SK-N-SH (cell line): ENCODE measurements at regions of chr4 and their contacts with region 1.

Region 1: GRCh38 chr4:174135936-174136406 is 147.5 kb downstream of the FBXO8 start:
- DNase-seq: peak; percentile 57
- H3K4me3 ChIP-seq: peak overlapping the region; percentile 42 to 55
- H3K27ac ChIP-seq: peak overlapping the region; percentile 56 to 100; a peak in 3 of 4 replicates
- H3K4me1 ChIP-seq: peaks cover 10 to 38% of the 10 kb centered on the region in 2 experiments; a peak in 3 of 4 replicates
- H3K27me3 ChIP-seq: no peaks in the 10 kb centered on the region
- CTCF ChIP-seq: no peak
- EP300 ChIP-seq: peak in 1 of 2 experiments; percentile 92; a peak in 2 of 4 replicates
- RAD21 ChIP-seq: 0 out of 2 replicates have a peak, but pooled peaks have one; percentile 6

Region 2: GRCh38 chr4:174069848-174070330 is 66.1 kb before region 1 on chr4:
- CTCF ChIA-PET with region 1: interaction called, 4 read pairs
- POLR2A ChIA-PET with region 1: interaction called, 22 read pairs
- DNase-seq: peak; percentile 69
- H3K4me3 ChIP-seq: no peak overlapping the region
- H3K27ac ChIP-seq: peak overlapping the region in 1 of 2 experiments; percentile 100; a peak in 2 of 4 replicates
- H3K4me1 ChIP-seq: peaks cover 0 to 26% of the 10 kb centered on the region in 2 experiments; a peak in 2 of 4 replicates
- H3K27me3 ChIP-seq: no peaks in the 10 kb centered on the region
- CTCF ChIP-seq: no peak
- EP300 ChIP-seq: peak; percentile 82 to 100
- RAD21 ChIP-seq: peak; percentile 46

Region 3: DNA sequence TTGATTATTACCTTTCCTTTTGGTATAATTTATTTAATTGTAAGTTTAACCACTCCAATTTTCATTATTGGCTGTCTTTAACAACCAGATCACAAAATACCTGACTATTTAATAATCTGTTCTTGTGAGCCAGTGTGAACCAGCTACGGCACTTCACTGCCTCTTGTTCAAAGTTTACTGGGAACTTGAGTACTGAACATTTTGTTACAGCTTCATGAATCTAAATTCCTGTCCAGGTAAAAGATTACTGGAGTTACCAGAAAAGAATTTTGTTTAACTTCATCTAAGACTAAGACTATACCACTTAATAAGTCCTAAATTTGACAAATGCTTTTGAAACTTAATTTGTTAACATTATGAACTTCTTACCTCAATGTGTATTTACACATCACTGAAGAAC is 30.8 kb before region 1 on chr4:
- CTCF ChIA-PET with region 1: no interaction called
- POLR2A ChIA-PET with region 1: no interaction called
- DNase-seq: no peak
- H3K4me3 ChIP-seq: no peak overlapping the region
- H3K27ac ChIP-seq: no peak overlapping the region; a peak in 1 of 4 replicates
- H3K4me1 ChIP-seq: peaks cover 0 to 4% of the 10 kb centered on the region in 2 experiments; a peak in 2 of 4 replicates
- H3K27me3 ChIP-seq: no peaks in the 10 kb centered on the region; the same call in 1 of the 2 replicates
- CTCF ChIP-seq: no peak
- EP300 ChIP-seq: no peak
- RAD21 ChIP-seq: no peak

Region 4: GRCh38 chr4:174147863-174148262 is 11.9 kb after region 1 on chr4:
- CTCF ChIA-PET with region 1: interaction called, 22 read pairs
- POLR2A ChIA-PET with region 1: interaction called, 27 read pairs
- DNase-seq: no peak
- H3K4me3 ChIP-seq: no peak overlapping the region
- H3K27ac ChIP-seq: peak overlapping the region in 1 of 2 experiments; percentile 100; a peak in 2 of 4 replicates
- H3K4me1 ChIP-seq: peaks cover 7 to 49% of the 10 kb centered on the region in 2 experiments; a peak in 3 of 4 replicates
- H3K27me3 ChIP-seq: no peaks in the 10 kb centered on the region
- CTCF ChIP-seq: no peak
- EP300 ChIP-seq: no peak
- RAD21 ChIP-seq: no peak

Region 5: GRCh38 chr4:174193438-174194374 is 57.7 kb after region 1 on chr4:
- CTCF ChIA-PET with region 1: interaction called, 3 read pairs
- POLR2A ChIA-PET with region 1: interaction called, 14 read pairs
- DNase-seq: peak; percentile 42
- H3K4me3 ChIP-seq: no peak overlapping the region
- H3K27ac ChIP-seq: peak overlapping the region in 1 of 2 experiments; percentile 100; a peak in 3 of 4 replicates
- H3K4me1 ChIP-seq: peaks cover 0 to 46% of the 10 kb centered on the region in 2 experiments; a peak in 2 of 4 replicates
- H3K27me3 ChIP-seq: no peaks in the 10 kb centered on the region
- CTCF ChIP-seq: no peak
- EP300 ChIP-seq: peak in 1 of 2 experiments; percentile 98; a peak in 3 of 4 replicates
- RAD21 ChIP-seq: peak; percentile 33; the same call in 1 of the 2 replicates

Region 6: GRCh38 chr4:174222266-174222872 is 86.4 kb after region 1 on chr4:
- CTCF ChIA-PET with region 1: interaction called, 4 read pairs
- POLR2A ChIA-PET with region 1: interaction called, 17 read pairs
- DNase-seq: no peak
- H3K4me3 ChIP-seq: no peak overlapping the region; a peak in 1 of 4 replicates
- H3K27ac ChIP-seq: peak overlapping the region in 1 of 2 experiments; percentile 36; a peak in 2 of 4 replicates
- H3K4me1 ChIP-seq: peaks cover 1 to 26% of the 10 kb centered on the region in 2 experiments; a peak in 3 of 4 replicates
- H3K27me3 ChIP-seq: no peaks in the 10 kb centered on the region
- CTCF ChIP-seq: peak; percentile 76
- EP300 ChIP-seq: no peak
- RAD21 ChIP-seq: peak; percentile 69

Region 7: DNA sequence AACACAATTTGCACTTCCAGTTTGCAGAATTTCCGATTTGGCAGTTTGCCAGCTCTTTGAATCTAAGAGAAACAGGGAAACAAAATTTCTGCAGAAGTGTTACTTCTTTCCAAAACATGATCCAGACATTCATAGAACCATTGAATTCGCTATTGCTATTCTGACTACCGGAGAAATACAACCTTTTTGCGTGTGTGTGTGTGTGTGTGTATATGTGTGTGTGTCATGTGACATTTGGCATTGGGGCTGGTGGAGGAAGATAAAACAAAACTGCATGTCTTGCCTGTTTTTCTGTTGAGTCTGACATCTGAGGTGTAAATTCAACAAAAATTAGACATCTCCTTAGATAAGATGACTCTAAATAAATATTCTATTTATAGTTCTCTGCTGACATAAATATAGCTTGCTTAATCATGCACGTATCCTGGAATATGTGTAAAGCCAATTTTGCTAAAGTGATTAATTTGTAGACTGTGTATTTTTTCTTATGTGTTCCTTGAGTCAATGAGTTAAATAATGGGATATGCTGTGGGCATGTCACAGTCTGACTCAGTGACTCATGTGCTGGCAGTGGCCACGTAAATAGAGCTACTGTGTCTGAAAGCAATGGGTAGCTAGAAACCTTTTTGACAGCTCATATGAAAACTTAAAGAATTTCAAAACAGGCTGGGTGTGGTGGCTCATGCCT is 287.4 kb after region 1 on chr4:
- CTCF ChIA-PET with region 1: no interaction called
- POLR2A ChIA-PET with region 1: no interaction called
- DNase-seq: no peak
- H3K4me3 ChIP-seq: no peak overlapping the region
- H3K27ac ChIP-seq: no peak overlapping the region
- H3K4me1 ChIP-seq: no peaks in the 10 kb centered on the region; a peak in 1 of 4 replicates
- H3K27me3 ChIP-seq: no peaks in the 10 kb centered on the region
- CTCF ChIP-seq: no peak
- EP300 ChIP-seq: no peak
- RAD21 ChIP-seq: no peak